Sciatic nerve (tissue), 2 donors: ENCODE measurements at regions of chr4 and their contacts with region 1.

Region 1: DNA sequence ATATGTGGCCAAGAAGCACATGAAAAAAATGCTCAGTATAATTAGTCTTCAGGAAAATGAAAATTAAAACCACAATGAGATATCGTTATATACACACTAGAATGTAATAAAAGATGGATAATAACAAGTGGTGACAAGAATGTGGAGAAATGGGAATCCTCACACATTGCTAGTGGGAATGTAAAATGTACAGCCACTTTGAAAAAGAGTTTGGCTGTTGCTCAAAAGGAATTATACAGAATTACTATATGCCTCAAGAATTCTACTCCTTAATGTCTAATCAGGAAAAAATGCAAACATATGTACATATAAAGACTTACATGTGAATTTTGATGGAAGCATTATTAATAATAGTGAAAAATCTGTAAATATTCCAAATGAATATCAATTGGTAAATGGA is 102.2 kb downstream of the SPCS3 start:
- DNase-seq: no peak
- ATAC-seq: no peak

Region 2: GRCh38 chr4:175103403-175103802 is 1318.6 kb before region 1 on chr4:
- intact Hi-C with region 1: no loop called
- DNase-seq: no peak
- ATAC-seq: no peak

Region 3: GRCh38 chr4:175614890-175615289 is 807.1 kb before region 1 on chr4:
- intact Hi-C with region 1: loop called (anchors 5 kb)
- DNase-seq: peak; percentile 58
- ATAC-seq: no peak

Region 4: DNA sequence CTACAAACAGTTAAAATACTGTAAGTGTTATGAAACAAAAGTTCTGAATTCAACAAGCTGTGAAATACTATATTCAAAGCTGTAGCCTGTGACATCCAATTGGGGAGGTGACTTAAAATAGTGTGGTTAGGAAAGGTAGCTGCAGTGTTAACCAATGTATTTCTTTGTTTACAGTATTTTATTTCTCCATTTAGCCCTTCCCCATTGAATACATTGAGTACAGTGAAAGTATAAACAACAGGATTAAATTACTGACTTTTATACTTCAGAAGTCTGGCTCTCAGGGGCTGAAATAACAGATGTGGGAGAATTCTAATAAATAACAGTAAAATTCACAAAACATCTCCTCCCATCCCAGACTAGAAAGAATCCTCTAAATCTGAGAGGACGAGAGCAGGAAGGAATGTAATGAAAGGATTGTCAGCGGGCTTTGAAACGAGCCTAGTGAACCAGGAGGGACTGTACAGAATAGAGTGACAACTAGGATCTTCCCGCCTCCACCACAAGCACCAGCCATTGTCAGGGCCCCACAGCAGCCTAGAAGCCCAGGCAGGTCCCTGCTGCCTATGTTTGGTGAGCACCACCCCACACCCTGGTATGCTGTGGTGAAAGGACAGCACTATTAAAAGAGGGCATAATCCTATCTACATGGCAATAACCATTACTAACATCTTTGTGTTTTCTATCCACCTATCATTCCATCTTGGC is 28.5 kb before region 1 on chr4:
- intact Hi-C with region 1: no loop called
- DNase-seq: no peak
- ATAC-seq: no peak

Region 5: GRCh38 chr4:176453079-176453478 is 31.1 kb after region 1 on chr4:
- intact Hi-C with region 1: no loop called
- DNase-seq: no peak
- ATAC-seq: no peak

Region 6: GRCh38 chr4:177339477-177340374 is 917.7 kb after region 1 on chr4:
- intact Hi-C with region 1: no loop called
- DNase-seq: no peak
- ATAC-seq: peak; percentile 75